ENCODE measurements at regions of chr10 and their contacts with region 1.

Region 1: GRCh38 chr10:28241741-28242399 is 61.0 kb downstream of the MPP7 start:
- DNase-seq: no peak
- H3K4me3 ChIP-seq: no peak overlapping the region
- CTCF ChIP-seq: peak; percentile 67

Region 2: DNA sequence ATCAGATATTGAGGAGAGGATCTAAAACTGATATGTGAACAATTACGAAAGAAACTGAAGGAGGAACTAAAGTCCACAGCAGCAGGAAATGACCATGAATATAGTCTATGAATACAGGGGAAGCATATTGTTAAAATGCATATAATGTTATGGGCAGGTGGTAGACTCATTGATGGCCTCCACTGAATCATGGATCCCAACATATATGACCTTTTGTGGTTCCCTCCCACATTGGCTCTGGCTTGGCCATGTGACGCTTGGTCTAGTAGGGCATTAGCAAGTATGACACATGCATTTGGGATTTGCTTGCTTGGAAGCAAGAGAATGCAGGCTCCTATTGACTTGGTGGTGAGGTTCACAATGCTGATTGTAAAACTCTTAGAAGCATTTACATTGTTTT is 792.9 kb before region 1 on chr10:
- CTCF ChIA-PET with region 1: interaction called, 10 read pairs
- POLR2A ChIA-PET with region 1: no interaction called
- DNase-seq: peak; percentile 9
- H3K4me3 ChIP-seq: no peak overlapping the region
- CTCF ChIP-seq: no peak

Region 3: GRCh38 chr10:27742195-27743011 is 499.5 kb before region 1 on chr10:
- CTCF ChIA-PET with region 1: interaction called, 24 read pairs
- POLR2A ChIA-PET with region 1: no interaction called
- DNase-seq: peak; percentile 69
- H3K4me3 ChIP-seq: peak overlapping the region; percentile 61
- CTCF ChIP-seq: peak; percentile 82

Region 4: GRCh38 chr10:27783660-27784059 is 458.2 kb before region 1 on chr10:
- CTCF ChIA-PET with region 1: interaction called, 12 read pairs
- POLR2A ChIA-PET with region 1: no interaction called
- DNase-seq: peak; percentile 23
- H3K4me3 ChIP-seq: no peak overlapping the region
- CTCF ChIP-seq: peak; percentile 62

Region 5: GRCh38 chr10:28120043-28120749 is 121.7 kb before region 1 on chr10:
- CTCF ChIA-PET with region 1: no interaction called
- POLR2A ChIA-PET with region 1: no interaction called
- DNase-seq: no peak
- H3K4me3 ChIP-seq: no peak overlapping the region
- CTCF ChIP-seq: no peak

Region 6: GRCh38 chr10:28219251-28219650 is 22.6 kb before region 1 on chr10:
- CTCF ChIA-PET with region 1: interaction called, 14 read pairs
- POLR2A ChIA-PET with region 1: no interaction called
- DNase-seq: peak; percentile 69
- H3K4me3 ChIP-seq: no peak overlapping the region
- CTCF ChIP-seq: no peak

Region 7: DNA sequence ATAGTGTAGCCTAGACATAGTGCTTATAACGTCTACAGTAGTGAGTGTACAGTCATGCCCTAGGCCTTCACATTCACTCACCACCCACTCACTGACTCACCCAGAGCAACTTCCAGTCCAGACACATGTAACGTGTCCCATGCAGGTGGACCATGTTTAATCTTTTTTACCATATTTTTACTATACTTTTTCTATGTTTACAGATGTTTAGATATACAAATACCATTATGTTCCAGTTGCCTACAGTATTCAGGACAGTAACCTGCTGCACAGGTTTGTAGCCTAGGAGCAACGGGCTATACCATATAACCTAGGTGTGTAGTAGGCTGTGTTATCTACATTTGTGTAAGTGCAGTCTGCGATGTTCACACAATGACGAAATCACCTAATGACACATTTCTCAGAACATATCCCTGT is 50.0 kb after region 1 on chr10:
- CTCF ChIA-PET with region 1: no interaction called
- POLR2A ChIA-PET with region 1: no interaction called
- DNase-seq: peak; percentile 65
- H3K4me3 ChIP-seq: no peak overlapping the region
- CTCF ChIP-seq: no peak

Region 8: GRCh38 chr10:28393966-28394568 is 152.2 kb after region 1 on chr10:
- CTCF ChIA-PET with region 1: interaction called, 42 read pairs
- POLR2A ChIA-PET with region 1: no interaction called
- DNase-seq: no peak
- H3K4me3 ChIP-seq: no peak overlapping the region
- CTCF ChIP-seq: peak; percentile 83